Activated CD4-positive, alpha-beta memory T cell treated with anti-CD3 and anti-CD28 coated beads, Interleukin-2, amount 10 ng/mL, durations not matched to agents 7 days and 5 days (primary cell): ENCODE measurements at regions of chr17 and their contacts with region 1.

Region 1: GRCh38 chr17:44775136-44775837 is 16.5 kb downstream of the ADAM11 start:
- DNase-seq: peak; percentile 98
- H3K4me3 Mint-ChIP-seq: peak overlapping the region; percentile 75
- H3K27ac Mint-ChIP-seq: peak overlapping the region; percentile 52
- H3K4me1 Mint-ChIP-seq: peaks cover 15% of the 10 kb centered on the region
- H3K27me3 Mint-ChIP-seq: peaks cover 8% of the 10 kb centered on the region

Region 2: DNA sequence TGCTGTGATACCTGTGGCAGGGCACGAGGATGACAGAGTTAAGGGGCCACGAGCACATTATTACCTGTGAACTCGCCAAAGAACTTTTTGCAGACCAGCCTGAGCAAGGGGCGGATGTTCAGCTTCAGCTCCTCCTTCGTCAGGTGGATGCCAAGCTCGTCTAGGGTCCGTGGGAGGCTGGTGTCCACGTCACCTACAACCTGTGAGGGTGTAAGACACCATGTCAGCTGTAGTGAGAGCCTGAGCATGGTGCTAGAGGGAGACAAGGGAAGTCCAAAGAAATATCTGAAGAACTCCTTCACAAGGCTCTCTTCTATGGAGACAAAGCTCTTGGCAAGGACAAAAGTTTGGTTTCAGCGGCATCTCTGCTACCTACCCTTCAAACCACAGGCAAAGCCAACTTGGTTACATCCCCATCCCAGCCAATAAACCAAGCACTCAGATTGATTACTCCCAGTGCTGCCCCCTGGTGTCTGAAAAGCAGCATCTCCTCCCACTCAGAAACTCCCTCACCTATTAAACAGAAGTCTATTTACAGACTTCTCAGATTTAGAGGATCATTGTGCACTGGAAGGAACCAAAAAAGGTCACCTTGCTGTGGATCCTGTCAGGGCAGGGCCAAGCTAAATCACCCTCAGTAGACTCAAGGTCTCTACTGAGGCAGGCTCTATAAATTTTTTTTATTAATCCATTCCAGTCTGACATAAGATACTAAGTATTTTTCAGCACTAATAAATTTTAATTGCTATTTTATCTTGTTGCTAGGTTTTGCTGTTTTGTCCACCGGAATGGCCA is 89.8 kb after region 1 on chr17:
- CTCF ChIA-PET with region 1: interaction called, 144 read pairs
- POLR2A ChIA-PET with region 1: interaction called, 3 read pairs
- DNase-seq: peak; percentile 69
- H3K4me3 Mint-ChIP-seq: no peak overlapping the region
- H3K27ac Mint-ChIP-seq: no peak overlapping the region
- H3K4me1 Mint-ChIP-seq: no peaks in the 10 kb centered on the region
- H3K27me3 Mint-ChIP-seq: no peaks in the 10 kb centered on the region

Region 3: DNA sequence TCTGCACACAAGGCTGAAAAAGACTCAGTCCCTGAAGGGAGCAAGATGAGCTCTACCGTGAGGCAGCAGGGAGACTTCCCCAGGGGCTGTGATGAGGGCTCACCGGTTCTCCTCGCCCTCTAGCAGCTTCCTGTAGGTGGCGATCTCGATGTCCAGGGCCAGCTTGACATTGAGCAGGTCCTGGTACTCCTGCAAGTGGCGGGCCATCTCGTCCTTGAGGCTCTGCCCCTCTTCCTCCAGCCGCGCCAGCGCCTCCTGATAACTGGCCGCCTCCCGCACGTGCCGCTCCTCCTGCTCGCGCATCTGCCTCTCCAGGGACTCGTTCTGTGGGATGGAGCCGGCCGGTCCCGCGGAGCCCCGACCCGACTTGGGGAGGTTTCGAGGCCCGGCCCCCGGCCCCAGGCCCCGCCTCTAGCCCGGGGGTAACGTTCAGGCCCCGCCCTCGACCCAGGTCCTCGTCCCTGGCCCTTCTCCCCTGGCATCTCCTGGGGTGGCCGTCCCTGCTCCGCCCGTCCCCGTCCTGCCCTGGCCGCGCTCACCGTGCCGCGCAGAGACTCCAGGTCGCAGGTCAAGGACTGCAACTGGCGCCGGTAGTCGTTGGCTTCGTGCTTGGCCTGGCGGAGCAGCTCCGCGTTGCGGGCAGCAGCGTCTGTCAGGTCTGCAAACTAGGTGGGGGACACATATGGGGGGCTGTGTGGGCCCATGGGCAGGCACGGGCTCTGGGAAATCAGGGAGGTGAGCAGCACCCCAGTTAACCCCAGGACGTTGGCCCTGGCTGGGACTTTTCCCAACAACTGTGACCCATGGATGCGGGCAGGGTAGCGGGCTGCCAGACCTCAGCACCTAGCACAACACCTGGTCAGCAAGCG is 136.1 kb after region 1 on chr17:
- CTCF ChIA-PET with region 1: no interaction called
- POLR2A ChIA-PET with region 1: no interaction called
- DNase-seq: peak; percentile 60
- H3K4me3 Mint-ChIP-seq: no peak overlapping the region
- H3K27ac Mint-ChIP-seq: no peak overlapping the region
- H3K4me1 Mint-ChIP-seq: peaks cover 14% of the 10 kb centered on the region
- H3K27me3 Mint-ChIP-seq: peaks cover 31% of the 10 kb centered on the region